Activated T-helper 1 cell treated with anti-CD3 and anti-CD28 coated beads, Interleukin-12 subunit alpha, Interleukin-12 subunit beta, Interleukin-2, Interleukin-4 antibody, amounts not matched to agents 30 ng/mL and 10 ng/mL and 1 ng/mL, durations not matched to agents 14 hours and 24 hours and 36 hours (primary cell): ENCODE measurements at regions of chr5 and their contacts with region 1.

Region 1: DNA sequence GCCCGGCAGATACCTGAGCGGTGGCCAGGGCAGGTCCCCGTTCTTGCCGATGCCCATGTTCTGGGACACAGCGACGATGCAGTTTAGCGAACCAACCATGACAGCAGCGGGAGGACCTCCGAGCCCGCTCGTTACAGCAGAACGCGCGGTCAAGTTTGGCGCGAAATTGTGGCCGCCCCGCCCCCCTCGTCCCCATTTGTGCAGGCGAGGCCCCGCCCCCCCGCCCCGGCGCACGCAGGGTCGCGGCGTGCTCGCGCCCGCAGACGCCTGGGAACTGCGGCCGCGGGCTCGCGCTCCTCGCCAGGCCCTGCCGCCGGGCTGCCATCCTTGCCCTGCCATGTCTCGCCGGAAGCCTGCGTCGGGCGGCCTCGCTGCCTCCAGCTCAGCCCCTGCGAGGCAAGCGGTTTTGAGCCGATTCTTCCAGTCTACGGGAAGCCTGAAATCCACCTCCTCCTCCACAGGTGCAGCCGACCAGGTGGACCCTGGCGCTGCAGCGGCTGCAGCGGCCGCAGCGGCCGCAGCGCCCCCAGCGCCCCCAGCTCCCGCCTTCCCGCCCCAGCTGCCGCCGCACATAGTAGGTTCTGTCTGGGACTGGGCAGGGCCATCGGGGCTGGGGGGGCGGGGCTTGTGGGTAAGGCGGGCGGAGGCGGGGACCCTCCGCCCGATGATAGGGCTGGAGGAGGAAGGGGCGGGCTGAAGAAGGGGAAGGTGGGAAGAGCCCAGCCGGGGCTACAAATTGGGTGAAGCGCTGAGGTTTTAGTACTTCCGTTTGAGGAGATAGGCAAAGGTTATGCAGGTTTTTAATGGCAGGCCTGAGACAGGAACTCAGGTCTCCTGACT is at the starts of genes DHFR and MSH3:
- DNase-seq: peak; percentile 84
- H3K4me3 Mint-ChIP-seq: peak within 1 kb of the TSS; percentile 93
- H3K27ac Mint-ChIP-seq: peak within 1 kb of the TSS; percentile 98
- H3K4me1 Mint-ChIP-seq: peaks cover 37% of the 10 kb centered on the region
- H3K27me3 Mint-ChIP-seq: no peaks in the 10 kb centered on the region
- total RNA-seq, gene DHFR: 55.9 and 60.3 TPM in 2 replicates
- total RNA-seq, gene MSH3: 20.2 and 20.7 TPM in 2 replicates

Region 2: DNA sequence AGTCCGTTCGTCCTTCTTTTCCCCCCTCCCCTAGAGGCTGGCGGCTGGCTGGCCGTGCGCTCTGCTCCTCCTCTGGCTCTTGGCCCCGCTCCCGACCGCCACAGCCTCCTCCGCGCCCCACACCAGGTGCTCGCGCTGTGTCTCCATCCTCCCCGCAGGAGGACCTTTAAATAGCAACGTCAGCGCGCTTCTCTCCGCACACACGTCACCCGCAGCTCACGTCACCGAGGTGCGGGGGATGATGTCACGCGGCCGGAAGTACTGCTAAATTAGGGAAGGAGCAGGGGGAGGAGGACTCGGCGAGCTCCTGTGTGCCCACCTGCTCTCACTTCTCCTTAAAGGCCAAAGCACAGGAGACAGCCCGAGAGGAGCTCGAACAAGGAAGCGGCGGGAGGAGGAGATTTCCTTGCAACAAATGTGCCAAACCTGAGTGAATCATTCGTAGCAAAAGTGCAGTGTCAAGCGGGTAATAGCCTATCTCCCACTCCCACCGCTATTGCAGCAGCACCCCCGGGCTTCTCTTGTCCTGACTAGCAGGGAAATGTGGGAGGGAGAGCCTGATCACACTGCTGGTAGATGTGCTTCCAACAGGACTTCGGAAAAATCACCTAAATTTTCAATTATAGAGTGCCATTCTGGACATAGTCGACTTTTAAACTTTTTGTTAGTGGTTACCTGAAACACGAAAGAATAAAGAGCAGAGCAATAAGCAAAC is 1140.1 kb before region 1 on chr5:
- intact Hi-C with region 1: loop called (anchors 10 kb)
- DNase-seq: peak; percentile 88
- H3K4me3 Mint-ChIP-seq: peak overlapping the region; percentile 99
- H3K27ac Mint-ChIP-seq: peak overlapping the region; percentile 100
- H3K4me1 Mint-ChIP-seq: peaks cover 43% of the 10 kb centered on the region
- H3K27me3 Mint-ChIP-seq: peaks cover 26% of the 10 kb centered on the region

Region 3: DNA sequence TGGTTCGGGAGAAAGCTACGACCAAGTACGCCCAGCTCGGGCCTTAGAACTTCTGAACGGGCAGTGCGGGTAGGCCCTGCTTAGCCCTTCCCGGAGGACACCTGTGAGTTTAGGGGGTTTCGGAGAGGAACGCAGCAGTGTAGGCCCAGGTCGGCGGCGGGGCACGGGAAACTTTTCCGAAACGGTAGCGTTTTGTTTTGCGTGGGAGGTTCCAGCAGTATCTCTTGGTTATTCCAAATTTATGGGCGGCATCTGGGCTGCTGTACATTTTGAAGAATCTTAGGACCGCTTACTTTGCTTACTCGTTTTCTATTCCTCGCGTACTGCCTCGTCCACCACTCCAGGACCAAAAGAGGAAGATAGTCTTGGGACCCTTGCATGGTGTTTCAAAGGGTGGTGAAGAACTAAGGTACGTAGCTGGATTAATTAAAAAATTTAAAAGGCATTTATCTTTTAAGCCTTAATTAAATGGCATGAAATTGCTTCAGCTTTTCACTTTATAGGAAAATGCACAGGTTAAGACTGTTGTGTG is 1041.9 kb before region 1 on chr5:
- intact Hi-C with region 1: loop called (anchors 2 kb)
- DNase-seq: no peak
- H3K4me3 Mint-ChIP-seq: peak overlapping the region; percentile 91
- H3K27ac Mint-ChIP-seq: peak overlapping the region; percentile 97
- H3K4me1 Mint-ChIP-seq: peaks cover 45% of the 10 kb centered on the region
- H3K27me3 Mint-ChIP-seq: no peaks in the 10 kb centered on the region

Region 4: GRCh38 chr5:80191991-80192398 is 462.6 kb before region 1 on chr5:
- intact Hi-C with region 1: loop called (anchors 10 kb)
- DNase-seq: peak; percentile 47
- H3K4me3 Mint-ChIP-seq: peak overlapping the region; percentile 62
- H3K27ac Mint-ChIP-seq: peak overlapping the region; percentile 86
- H3K4me1 Mint-ChIP-seq: peaks cover 86% of the 10 kb centered on the region
- H3K27me3 Mint-ChIP-seq: no peaks in the 10 kb centered on the region

Region 5: GRCh38 chr5:80487829-80488721 is 166.5 kb before region 1 on chr5 and contains the start of gene FAM151B:
- intact Hi-C with region 1: loop called (anchors 5 kb)
- DNase-seq: peak; percentile 57
- H3K4me3 Mint-ChIP-seq: peak within 1 kb of the TSS; percentile 85
- H3K27ac Mint-ChIP-seq: no peak within 1 kb of the TSS
- H3K4me1 Mint-ChIP-seq: peaks cover 16% of the 10 kb centered on the region
- H3K27me3 Mint-ChIP-seq: peaks cover 24% of the 10 kb centered on the region
- total RNA-seq, gene FAM151B: 0.32 TPM in 1 of 2 replicates, not detected in the other

Region 6: GRCh38 chr5:80672140-80672736 is 17.6 kb after region 1 on chr5:
- intact Hi-C with region 1: loop called (anchors 1 kb)
- DNase-seq: peak; percentile 49
- H3K4me3 Mint-ChIP-seq: no peak overlapping the region
- H3K27ac Mint-ChIP-seq: no peak overlapping the region
- H3K4me1 Mint-ChIP-seq: no peaks in the 10 kb centered on the region
- H3K27me3 Mint-ChIP-seq: no peaks in the 10 kb centered on the region

Region 7: DNA sequence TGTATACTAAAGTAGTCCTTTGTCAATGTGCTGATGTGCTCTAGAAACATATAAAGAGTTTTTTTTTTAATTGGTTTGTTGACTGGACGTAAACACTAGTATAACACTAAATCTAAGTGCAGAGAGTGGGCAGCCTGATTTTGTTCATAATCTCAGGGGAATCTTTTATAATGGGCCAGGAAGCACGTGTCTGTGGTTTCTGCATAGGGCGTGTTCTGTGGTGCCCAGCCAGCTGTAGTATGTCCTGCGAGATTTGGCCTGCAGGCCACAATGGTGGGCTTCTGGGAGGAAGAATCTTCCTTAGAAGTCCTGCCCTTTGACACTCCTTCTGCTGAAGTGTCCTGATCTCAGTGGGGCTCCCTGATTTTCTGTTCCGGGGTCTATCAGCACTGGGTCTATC is 49.1 kb after region 1 on chr5:
- intact Hi-C with region 1: no loop called
- DNase-seq: no peak
- H3K4me3 Mint-ChIP-seq: no peak overlapping the region
- H3K27ac Mint-ChIP-seq: no peak overlapping the region
- H3K4me1 Mint-ChIP-seq: peaks cover 27% of the 10 kb centered on the region
- H3K27me3 Mint-ChIP-seq: no peaks in the 10 kb centered on the region

Region 8: DNA sequence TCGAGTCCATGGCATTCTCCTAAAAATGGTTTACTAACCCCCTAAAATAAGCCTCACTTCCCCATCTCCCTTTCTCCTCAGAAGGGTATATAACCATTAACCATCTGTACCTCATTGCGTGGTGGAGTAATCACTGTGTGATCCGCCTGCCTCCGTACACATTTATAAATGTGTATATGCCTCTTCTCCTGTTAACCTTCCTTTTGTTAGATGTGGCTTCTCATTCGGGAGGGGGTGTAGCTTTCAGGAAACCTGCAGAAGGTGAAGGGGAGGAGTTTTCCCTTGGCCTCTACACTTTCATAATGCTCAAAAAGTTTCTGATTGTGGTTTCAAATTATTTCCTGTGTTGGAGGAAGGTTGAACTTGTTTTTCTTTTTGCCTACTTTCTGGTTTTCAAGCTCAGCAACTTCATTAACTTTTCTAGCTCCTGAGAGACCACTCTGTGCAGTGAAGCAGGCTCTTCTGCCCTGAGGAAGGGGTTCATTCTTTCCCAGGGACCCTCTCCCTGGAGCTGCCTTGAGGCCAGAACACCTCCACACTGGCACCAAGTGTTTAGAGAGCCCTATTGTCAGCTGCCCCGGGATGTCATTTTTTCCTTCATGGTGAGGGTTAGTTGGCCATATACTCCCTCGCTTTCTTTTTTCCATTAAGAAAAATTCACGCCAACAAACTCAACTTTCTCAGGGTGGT is 352.5 kb after region 1 on chr5:
- intact Hi-C with region 1: loop called (anchors 1 kb)
- DNase-seq: peak; percentile 50
- H3K4me3 Mint-ChIP-seq: peak overlapping the region; percentile 71
- H3K27ac Mint-ChIP-seq: peak overlapping the region; percentile 81
- H3K4me1 Mint-ChIP-seq: peaks cover 54% of the 10 kb centered on the region
- H3K27me3 Mint-ChIP-seq: no peaks in the 10 kb centered on the region